A549 (cell line): ENCODE measurements at regions of chr6 and their contacts with region 1.

Region 1: GRCh38 chr6:89610149-89610642 is 28.4 kb downstream of the LYRM2 start:
- DNase-seq: peak; percentile 38 to 50
- ATAC-seq: peak; percentile 77 to 94
- H3K4me3 ChIP-seq: no peak overlapping the region
- H3K27ac ChIP-seq: no peak overlapping the region
- H3K4me1 ChIP-seq: no peaks in the 10 kb centered on the region
- CTCF ChIP-seq: peak; percentile 77
- EP300 ChIP-seq: no peak
- POLR2A ChIP-seq: no peak
- RAD21 ChIP-seq: peak; percentile 53 to 58; a peak in 4 of 5 replicates

Region 2: GRCh38 chr6:89432875-89433251 is 177.3 kb before region 1 on chr6 and contains the start of gene ANKRD6:
- CTCF ChIA-PET with region 1: interaction called, 19 read pairs
- POLR2A ChIA-PET with region 1: no interaction called
- DNase-seq: peak; percentile 39 to 46
- ATAC-seq: peak; percentile 96 to 97
- H3K4me3 ChIP-seq: peak within 1 kb of the TSS; percentile 84
- H3K27ac ChIP-seq: peak within 1 kb of the TSS; percentile 75 to 88
- H3K4me1 ChIP-seq: no peaks in the 10 kb centered on the region
- CTCF ChIP-seq: peak; percentile 87
- EP300 ChIP-seq: no peak
- POLR2A ChIP-seq: no peak
- RAD21 ChIP-seq: peak; percentile 67 to 90
- polyA plus RNA-seq, gene ANKRD6: 2.9 and 3.6 TPM in 2 replicates

Region 3: GRCh38 chr6:89599727-89600126 is 10.5 kb before region 1 on chr6:
- CTCF ChIA-PET with region 1: interaction called, 14 read pairs
- POLR2A ChIA-PET with region 1: no interaction called
- DNase-seq: no peak
- ATAC-seq: no peak
- H3K4me3 ChIP-seq: no peak overlapping the region
- H3K27ac ChIP-seq: no peak overlapping the region
- H3K4me1 ChIP-seq: no peaks in the 10 kb centered on the region
- CTCF ChIP-seq: no peak
- EP300 ChIP-seq: no peak
- POLR2A ChIP-seq: no peak
- RAD21 ChIP-seq: no peak

Region 4: DNA sequence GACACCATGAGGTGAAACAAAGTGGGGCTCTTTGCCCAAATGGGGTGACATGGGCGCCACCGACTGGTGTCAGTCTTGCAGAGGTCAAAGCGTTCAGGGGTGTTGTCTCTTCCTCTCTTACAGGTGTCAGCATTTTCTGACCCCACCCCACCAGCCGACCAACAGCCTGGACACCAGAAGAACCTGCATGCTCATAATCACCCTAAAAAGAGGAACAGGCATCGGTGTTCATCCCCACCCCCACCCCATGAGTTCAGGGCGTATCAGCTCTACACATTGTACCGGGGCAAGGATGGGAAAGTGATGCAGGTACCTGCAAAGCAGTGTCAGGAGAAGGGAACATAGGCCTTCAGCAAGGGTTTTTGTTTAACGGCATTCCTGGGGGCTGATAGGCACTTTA is 13.6 kb after region 1 on chr6:
- CTCF ChIA-PET with region 1: interaction called, 10 read pairs
- POLR2A ChIA-PET with region 1: no interaction called
- DNase-seq: no peak
- ATAC-seq: no peak
- H3K4me3 ChIP-seq: no peak overlapping the region
- H3K27ac ChIP-seq: no peak overlapping the region
- H3K4me1 ChIP-seq: no peaks in the 10 kb centered on the region
- CTCF ChIP-seq: no peak
- EP300 ChIP-seq: no peak
- POLR2A ChIP-seq: no peak
- RAD21 ChIP-seq: no peak

Region 5: DNA sequence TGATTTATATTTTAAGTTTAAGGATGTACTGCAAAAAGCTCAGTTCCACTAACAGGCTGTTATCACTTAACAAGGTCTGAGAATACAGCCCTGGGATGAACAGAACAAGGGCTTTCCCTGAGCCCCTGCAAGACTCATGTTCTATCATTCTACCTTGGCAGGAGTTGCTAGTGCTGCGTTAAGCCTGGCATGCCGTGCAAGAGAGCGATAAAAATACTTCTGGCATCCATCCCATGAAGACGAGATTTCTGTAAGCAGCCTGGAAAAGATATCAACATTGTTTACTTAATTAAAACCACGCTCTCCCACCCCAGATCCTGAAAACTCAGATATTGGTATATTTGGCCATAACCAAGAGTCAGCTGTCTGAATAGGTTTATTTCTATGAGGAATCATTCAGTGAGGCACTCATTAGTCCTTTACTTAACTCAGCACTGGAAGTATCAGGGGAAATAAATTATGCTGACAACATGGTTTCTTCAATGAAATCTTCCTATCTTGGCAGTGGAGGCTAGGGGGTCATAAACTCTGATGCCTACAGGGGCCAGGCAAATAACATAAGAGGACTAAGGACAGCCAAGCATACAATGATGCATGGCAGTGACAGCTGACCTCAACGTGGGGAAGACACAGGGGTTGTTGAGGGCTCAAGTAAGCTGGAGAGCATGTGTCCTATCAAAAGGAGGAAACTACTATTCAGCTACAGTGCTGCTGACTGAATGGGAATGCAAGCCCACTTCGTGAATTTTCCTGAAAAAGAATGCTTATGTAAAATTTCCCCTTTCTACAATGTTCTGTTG is 66.0 kb after region 1 on chr6:
- CTCF ChIA-PET with region 1: no interaction called
- POLR2A ChIA-PET with region 1: no interaction called
- DNase-seq: no peak
- ATAC-seq: no peak
- H3K4me3 ChIP-seq: no peak overlapping the region
- H3K27ac ChIP-seq: no peak overlapping the region
- H3K4me1 ChIP-seq: no peaks in the 10 kb centered on the region
- CTCF ChIP-seq: no peak
- EP300 ChIP-seq: no peak
- POLR2A ChIP-seq: no peak
- RAD21 ChIP-seq: no peak